HEK293 (cell line): ENCODE measurements at regions of chr19 and their contacts with region 1.

Region 1: DNA sequence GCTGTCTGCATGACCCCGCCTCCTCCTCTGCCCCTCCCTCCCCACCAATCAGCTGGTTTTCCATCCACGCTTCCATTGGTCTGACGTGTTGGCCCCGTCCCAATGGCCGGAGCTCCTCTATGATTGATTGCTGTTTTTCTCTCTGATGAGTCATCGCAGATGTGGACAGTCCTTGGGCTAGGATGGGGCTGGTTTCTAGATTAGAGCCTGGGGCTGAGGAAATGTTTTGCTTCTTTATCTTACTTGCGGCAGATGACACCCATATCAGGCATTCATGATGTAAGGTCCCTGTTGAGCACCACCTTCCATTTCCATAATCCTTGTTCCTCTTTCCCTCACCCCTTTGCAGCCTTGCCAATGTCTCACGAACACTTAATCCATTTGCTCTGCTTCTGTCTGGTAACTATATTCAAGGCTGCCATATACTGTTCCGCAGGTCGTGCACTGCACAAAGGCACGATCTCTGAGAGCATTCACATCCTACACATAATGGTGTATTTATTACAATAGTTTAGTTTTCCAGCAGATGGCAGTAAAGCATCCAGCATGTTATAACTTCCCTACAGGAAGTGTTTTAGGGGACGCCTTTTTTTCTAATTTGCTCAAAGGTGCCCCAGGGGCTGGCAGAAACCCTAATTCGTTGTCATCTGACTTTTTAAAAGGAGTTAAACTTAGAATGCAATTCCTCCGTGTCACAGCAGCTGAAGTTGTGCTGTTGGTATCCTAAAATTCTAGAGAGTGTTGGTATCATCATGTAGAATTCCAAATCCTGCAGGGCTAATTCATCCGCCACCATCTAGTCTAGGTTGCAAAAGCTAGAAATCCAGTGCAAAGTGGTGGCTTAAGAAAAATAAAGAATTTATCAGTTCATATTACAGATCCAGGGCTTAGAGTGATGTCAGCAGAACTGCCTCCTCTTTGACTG is 73.5 kb downstream of the MAP4K1 start:
- H3K4me3 ChIP-seq: peak overlapping the region; percentile 37
- H3K27ac ChIP-seq: peak overlapping the region; percentile 19
- H3K4me1 ChIP-seq: peaks cover 11% of the 10 kb centered on the region
- CTCF ChIP-seq: peak; percentile 90

Region 2: DNA sequence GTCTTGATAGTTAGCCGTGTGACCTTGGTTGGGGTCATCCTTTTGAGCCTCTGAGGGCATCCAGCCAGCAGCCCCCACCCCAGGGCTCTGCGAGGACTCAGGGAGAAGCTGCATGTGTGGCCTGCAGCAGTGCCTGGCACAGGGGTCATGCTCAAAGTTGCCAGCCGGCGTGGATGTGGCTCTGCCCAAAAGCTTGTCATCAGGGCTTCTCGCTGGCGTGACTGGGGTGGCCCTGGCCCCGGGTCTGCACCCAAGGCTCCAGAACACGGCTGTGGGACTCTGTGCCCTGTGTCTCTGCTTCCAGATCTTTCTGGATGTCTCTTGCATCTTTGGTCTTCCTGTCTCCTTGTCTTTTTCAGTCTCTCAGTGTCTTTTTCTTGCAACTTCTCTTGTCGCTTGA is 19.9 kb before region 1 on chr19:
- CTCF ChIA-PET with region 1: interaction called, 19 read pairs
- POLR2A ChIA-PET with region 1: interaction called, 3 read pairs
- H3K4me3 ChIP-seq: no peak overlapping the region
- H3K27ac ChIP-seq: no peak overlapping the region
- H3K4me1 ChIP-seq: no peaks in the 10 kb centered on the region
- CTCF ChIP-seq: no peak

Region 3: DNA sequence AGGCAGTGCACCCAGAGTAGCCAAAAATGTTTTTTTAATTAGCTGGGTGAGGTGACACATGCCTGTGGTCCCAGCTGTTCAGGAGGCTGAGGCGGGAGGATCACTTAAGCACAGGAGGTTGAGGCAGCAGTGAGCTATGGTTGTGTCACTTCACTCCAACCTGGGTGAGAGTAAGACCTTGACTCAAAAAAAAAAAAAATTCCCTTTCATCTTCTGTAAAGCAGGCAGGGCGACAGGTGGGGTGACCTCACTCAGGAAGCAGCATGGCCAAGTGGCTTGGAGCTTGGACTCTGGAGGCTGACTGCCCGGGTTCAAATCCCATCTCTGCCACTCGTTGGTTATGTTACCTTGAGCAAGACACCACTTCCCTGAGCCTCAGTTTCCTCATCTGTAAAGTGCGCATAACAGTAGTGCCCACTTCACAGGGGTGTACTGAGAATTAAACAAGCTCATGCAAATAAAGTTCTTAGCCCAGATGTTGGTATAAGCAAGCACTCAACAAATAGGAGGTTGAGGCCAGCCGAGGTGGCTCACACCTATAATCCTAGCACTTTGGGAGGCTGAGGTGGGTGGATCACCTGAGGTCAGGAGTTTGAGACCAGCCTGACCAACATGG is 25.2 kb after region 1 on chr19:
- CTCF ChIA-PET with region 1: interaction called, 10 read pairs
- POLR2A ChIA-PET with region 1: interaction called, 5 read pairs
- H3K4me3 ChIP-seq: no peak overlapping the region
- H3K27ac ChIP-seq: no peak overlapping the region
- H3K4me1 ChIP-seq: no peaks in the 10 kb centered on the region; the same call in 1 of the 2 replicates
- CTCF ChIP-seq: no peak